ENCODE measurements at regions of chr16 and their contacts with region 1.

Region 1: GRCh38 chr16:46973207-46973995 is at the start of gene DNAJA2:
- DNase-seq: peak; percentile 86 to 95 (median 92)
- ATAC-seq: peak; percentile 98
- H3K4me3 ChIP-seq: peak within 1 kb of the TSS; percentile 81
- H3K4me3 Mint-ChIP-seq: peak within 1 kb of the TSS; percentile 88 to 98 (median 95)
- H3K27ac ChIP-seq: peak within 1 kb of the TSS; percentile 93
- H3K27ac Mint-ChIP-seq: peak within 1 kb of the TSS; percentile 87 to 100 (median 99)
- H3K4me1 ChIP-seq: peaks cover 26 to 33% of the 10 kb centered on the region in 2 donors
- H3K4me1 Mint-ChIP-seq: peaks cover 27 to 70% (median 51%) of the 10 kb centered on the region in 7 donors
- H3K27me3 ChIP-seq: no peaks in the 10 kb centered on the region
- H3K27me3 Mint-ChIP-seq: no peaks in the 10 kb centered on the region
- total RNA-seq, gene DNAJA2: 59.4 to 73.3 (median 60.9) TPM

Region 2: DNA sequence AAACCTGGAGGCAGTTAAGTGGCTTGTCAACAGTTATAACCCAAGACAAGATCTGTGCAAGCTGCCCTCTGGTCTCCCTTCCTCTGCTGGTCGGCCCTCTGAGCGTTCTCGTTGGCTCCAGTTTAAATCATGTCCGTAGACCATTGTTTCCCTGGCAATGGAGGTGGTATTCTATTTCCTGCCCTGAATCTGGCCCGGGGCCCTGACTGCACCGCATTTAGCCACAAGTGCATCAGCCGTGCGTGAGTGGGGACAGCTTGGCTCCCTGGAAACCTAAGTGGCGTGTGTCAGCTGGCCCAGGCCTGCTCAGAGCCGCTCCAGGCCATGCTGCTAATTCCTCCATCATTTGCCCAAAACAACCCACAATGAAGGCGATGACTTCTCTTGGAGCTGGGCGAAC is 210.3 kb before region 1 on chr16:
- CTCF ChIA-PET with region 1: no interaction called
- POLR2A ChIA-PET with region 1: no interaction called
- intact Hi-C with region 1: no loop called
- DNase-seq: no peak
- ATAC-seq: no peak
- H3K4me3 ChIP-seq: no peak overlapping the region
- H3K4me3 Mint-ChIP-seq: no peak overlapping the region
- H3K27ac ChIP-seq: no peak overlapping the region
- H3K27ac Mint-ChIP-seq: no peak overlapping the region
- H3K4me1 ChIP-seq: no peaks in the 10 kb centered on the region
- H3K4me1 Mint-ChIP-seq: peaks cover 0 to 4% (median 0%) of the 10 kb centered on the region in 7 donors
- H3K27me3 ChIP-seq: no peaks in the 10 kb centered on the region
- H3K27me3 Mint-ChIP-seq: peaks cover 0 to 8% (median 0%) of the 10 kb centered on the region in 5 donors

Region 3: GRCh38 chr16:46789499-46790414 is 183.6 kb before region 1 on chr16:
- CTCF ChIA-PET with region 1: no interaction called
- POLR2A ChIA-PET with region 1: interaction called, 8 read pairs
- intact Hi-C with region 1: loop called (anchors 1 to 2 kb)
- DNase-seq: peak; percentile 62 to 81 (median 79)
- ATAC-seq: peak; percentile 99
- H3K4me3 ChIP-seq: peak overlapping the region; percentile 79
- H3K4me3 Mint-ChIP-seq: peak overlapping the region; percentile 77 to 87 (median 84)
- H3K27ac ChIP-seq: peak overlapping the region; percentile 65
- H3K27ac Mint-ChIP-seq: peak overlapping the region; percentile 33 to 92 (median 82)
- H3K4me1 ChIP-seq: peaks cover 0 to 10% of the 10 kb centered on the region in 2 donors
- H3K4me1 Mint-ChIP-seq: peaks cover 5 to 27% (median 24%) of the 10 kb centered on the region in 7 donors
- H3K27me3 ChIP-seq: no peaks in the 10 kb centered on the region
- H3K27me3 Mint-ChIP-seq: peaks cover 0 to 3% (median 0%) of the 10 kb centered on the region in 5 donors

Region 4: DNA sequence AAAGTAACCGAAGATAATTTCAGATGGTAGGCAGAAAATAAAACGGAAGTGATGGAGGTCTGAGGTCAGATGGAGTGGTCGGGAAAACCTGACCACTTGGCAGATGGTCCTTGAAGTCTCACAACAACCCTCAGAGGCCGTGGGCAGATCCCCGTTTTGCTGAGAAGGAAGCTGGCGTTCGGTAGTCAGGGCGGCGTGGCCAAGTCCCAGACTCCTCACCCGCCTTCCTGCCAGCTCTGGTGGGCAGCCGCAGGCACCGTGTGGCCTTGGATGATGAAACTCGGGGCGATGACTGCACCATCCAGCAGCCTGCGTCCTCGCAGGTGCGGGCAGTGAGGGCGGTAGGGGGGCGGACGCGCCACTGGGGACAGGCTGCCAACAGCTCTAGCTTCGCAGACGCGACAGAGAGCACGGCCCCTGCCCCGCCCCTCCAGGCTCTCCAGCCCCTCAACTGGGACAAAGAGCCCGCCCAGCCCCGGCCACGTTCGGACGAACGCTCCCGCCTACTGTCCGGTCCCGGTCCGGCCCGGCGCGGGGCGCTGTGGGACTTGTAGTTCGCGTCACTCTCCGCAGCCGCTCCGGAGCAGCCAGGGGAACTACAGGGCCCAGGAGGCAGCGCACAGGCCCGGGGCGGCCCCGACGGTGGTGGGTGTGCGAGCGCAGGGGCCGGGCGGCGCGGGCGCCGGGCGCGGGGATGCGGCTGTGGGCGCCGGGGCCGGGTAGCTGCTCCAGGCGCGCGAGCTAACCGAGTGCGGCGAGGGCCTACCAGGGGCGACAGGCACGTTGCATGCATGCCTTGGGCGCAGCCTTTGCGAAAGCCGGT is 89.5 kb before region 1 on chr16 and contains the start of gene GPT2:
- CTCF ChIA-PET with region 1: no interaction called
- POLR2A ChIA-PET with region 1: no interaction called
- intact Hi-C with region 1: loop called (anchors 1 kb)
- DNase-seq: peak; percentile 29 to 89 (median 57)
- ATAC-seq: peak; percentile 97
- H3K4me3 ChIP-seq: peak within 1 kb of the TSS; percentile 67
- H3K4me3 Mint-ChIP-seq: peak within 1 kb of the TSS; percentile 86 to 92 (median 89)
- H3K27ac ChIP-seq: no peak within 1 kb of the TSS
- H3K27ac Mint-ChIP-seq: peak within 1 kb of the TSS in 5 of 9 donors; percentile 25 to 82 (median 71)
- H3K4me1 ChIP-seq: peaks cover 0 to 3% of the 10 kb centered on the region in 2 donors
- H3K4me1 Mint-ChIP-seq: peaks cover 8 to 21% (median 16%) of the 10 kb centered on the region in 7 donors
- H3K27me3 ChIP-seq: no peaks in the 10 kb centered on the region
- H3K27me3 Mint-ChIP-seq: peaks cover 0 to 39% (median 6%) of the 10 kb centered on the region in 5 donors
- total RNA-seq, gene GPT2: 0.40 to 7.7 (median 0.73) TPM

Region 5: GRCh38 chr16:46895399-46896313 is 77.7 kb before region 1 on chr16:
- CTCF ChIA-PET with region 1: no interaction called
- POLR2A ChIA-PET with region 1: no interaction called
- intact Hi-C with region 1: no loop called
- DNase-seq: no peak
- ATAC-seq: no peak
- H3K4me3 ChIP-seq: no peak overlapping the region
- H3K4me3 Mint-ChIP-seq: no peak overlapping the region
- H3K27ac ChIP-seq: no peak overlapping the region
- H3K27ac Mint-ChIP-seq: no peak overlapping the region
- H3K4me1 ChIP-seq: no peaks in the 10 kb centered on the region
- H3K4me1 Mint-ChIP-seq: peaks cover 0 to 3% (median 0%) of the 10 kb centered on the region in 7 donors
- H3K27me3 ChIP-seq: no peaks in the 10 kb centered on the region
- H3K27me3 Mint-ChIP-seq: peaks cover 0 to 4% (median 0%) of the 10 kb centered on the region in 5 donors

Region 6: DNA sequence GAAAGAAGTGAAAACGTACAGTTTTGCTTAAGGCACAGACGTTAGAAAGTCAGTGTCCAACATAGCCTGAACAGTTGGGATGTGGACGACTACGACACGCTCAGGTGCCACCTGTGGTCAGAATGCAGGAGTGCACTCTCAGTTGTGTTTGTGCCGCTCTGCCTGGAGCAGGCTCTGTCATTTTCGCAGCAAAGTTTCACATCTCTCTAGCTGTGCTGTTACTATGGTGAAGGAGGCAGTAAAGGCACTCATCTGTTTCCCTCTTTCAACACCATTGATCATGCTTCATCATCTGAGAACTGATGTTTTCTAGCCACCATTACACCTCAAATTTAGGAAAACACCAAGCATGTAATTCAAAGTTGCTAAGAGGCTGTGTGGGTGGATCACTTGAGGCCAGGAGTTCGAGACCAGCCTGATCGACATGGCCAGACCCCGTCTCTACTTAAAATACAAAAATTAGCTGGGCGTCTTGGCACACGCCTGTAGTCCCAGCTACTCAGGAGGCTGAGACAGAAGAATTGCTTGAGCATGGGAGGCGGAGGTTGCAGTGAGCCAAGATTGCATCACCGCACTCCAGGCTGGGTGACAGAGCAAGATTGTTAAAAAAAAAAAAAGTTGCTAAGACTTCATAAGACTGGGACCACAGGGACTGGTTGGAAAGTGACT is 45.0 kb after region 1 on chr16:
- CTCF ChIA-PET with region 1: no interaction called
- POLR2A ChIA-PET with region 1: interaction called, 3 read pairs
- intact Hi-C with region 1: loop called (anchors 2 kb)
- DNase-seq: peak in 3 of 9 donors; percentile 5 to 18 (median 10)
- ATAC-seq: peak; percentile 82
- H3K4me3 ChIP-seq: no peak overlapping the region
- H3K4me3 Mint-ChIP-seq: no peak overlapping the region
- H3K27ac ChIP-seq: no peak overlapping the region
- H3K27ac Mint-ChIP-seq: no peak overlapping the region
- H3K4me1 ChIP-seq: peaks cover 0 to 15% of the 10 kb centered on the region in 2 donors
- H3K4me1 Mint-ChIP-seq: peaks cover 6 to 22% (median 11%) of the 10 kb centered on the region in 7 donors
- H3K27me3 ChIP-seq: no peaks in the 10 kb centered on the region
- H3K27me3 Mint-ChIP-seq: peaks cover 0 to 3% (median 0%) of the 10 kb centered on the region in 5 donors

Region 7: GRCh38 chr16:47308601-47309000 is 335.2 kb after region 1 on chr16:
- CTCF ChIA-PET with region 1: no interaction called
- POLR2A ChIA-PET with region 1: no interaction called
- intact Hi-C with region 1: no loop called
- DNase-seq: no peak
- ATAC-seq: no peak
- H3K4me3 ChIP-seq: no peak overlapping the region
- H3K4me3 Mint-ChIP-seq: no peak overlapping the region
- H3K27ac ChIP-seq: no peak overlapping the region
- H3K27ac Mint-ChIP-seq: no peak overlapping the region
- H3K4me1 ChIP-seq: no peaks in the 10 kb centered on the region
- H3K4me1 Mint-ChIP-seq: peaks cover 0 to 2% (median 0%) of the 10 kb centered on the region in 7 donors
- H3K27me3 ChIP-seq: no peaks in the 10 kb centered on the region
- H3K27me3 Mint-ChIP-seq: no peaks in the 10 kb centered on the region

Region 8: DNA sequence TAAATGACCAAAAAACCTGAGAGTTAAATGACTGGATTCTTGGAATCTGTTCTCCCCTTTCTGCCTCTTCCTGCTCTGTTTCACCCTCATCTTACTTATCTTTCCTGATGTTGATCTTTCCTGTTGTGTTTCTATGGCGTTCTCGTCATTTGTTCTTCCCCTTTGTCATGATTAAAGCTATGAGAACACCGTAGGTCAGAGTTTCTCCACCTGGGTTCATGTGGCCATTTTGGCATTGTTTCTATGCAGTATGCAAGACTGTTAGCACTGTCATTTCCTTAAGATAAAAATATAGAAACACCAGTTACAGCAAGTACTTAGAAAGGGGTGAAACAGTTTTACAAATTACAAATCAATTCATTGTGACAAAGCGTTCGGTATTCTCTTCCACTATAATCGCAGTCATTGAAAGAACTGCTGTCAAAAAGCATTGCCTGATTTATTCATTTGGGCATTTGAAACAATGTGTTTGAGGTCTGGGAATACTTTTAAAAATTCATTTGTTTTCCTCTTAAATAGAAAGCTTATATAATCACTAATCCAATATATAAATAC is 653.8 kb after region 1 on chr16:
- CTCF ChIA-PET with region 1: no interaction called
- POLR2A ChIA-PET with region 1: no interaction called
- intact Hi-C with region 1: no loop called
- DNase-seq: no peak
- ATAC-seq: no peak
- H3K4me3 ChIP-seq: no peak overlapping the region
- H3K4me3 Mint-ChIP-seq: no peak overlapping the region
- H3K27ac ChIP-seq: no peak overlapping the region
- H3K27ac Mint-ChIP-seq: no peak overlapping the region
- H3K4me1 ChIP-seq: no peaks in the 10 kb centered on the region
- H3K4me1 Mint-ChIP-seq: peaks cover 0 to 21% (median 2%) of the 10 kb centered on the region in 7 donors
- H3K27me3 ChIP-seq: no peaks in the 10 kb centered on the region
- H3K27me3 Mint-ChIP-seq: no peaks in the 10 kb centered on the region

Region 9: DNA sequence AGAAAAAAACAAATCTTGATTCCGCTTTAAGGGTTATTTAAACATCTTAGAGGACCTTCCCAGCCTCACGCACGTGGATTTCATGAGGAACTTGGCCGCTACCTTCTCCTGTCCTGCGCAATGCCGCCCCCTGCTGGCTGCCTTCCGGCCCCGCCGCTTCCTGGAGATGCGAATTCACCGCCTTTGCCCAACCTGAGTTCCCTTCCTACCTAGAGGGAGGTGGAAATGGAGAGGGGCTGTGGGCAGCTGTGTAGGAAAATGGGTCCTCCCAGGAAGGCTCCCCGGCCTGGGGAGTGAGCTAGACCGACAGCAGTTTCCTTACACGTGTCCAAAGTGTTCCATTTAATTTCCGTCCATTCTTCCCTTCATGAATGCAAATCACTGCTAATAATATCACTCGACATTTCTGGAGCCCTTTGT is 1183.4 kb after region 1 on chr16:
- CTCF ChIA-PET with region 1: no interaction called
- POLR2A ChIA-PET with region 1: no interaction called
- intact Hi-C with region 1: loop called in 1 of 2 experiments (anchors 2 kb)
- DNase-seq: peak; percentile 33 to 89 (median 69)
- ATAC-seq: peak; percentile 88
- H3K4me3 ChIP-seq: no peak overlapping the region
- H3K4me3 Mint-ChIP-seq: no peak overlapping the region
- H3K27ac ChIP-seq: no peak overlapping the region
- H3K27ac Mint-ChIP-seq: no peak overlapping the region
- H3K4me1 ChIP-seq: no peaks in the 10 kb centered on the region
- H3K4me1 Mint-ChIP-seq: peaks cover 0 to 23% (median 0%) of the 10 kb centered on the region in 7 donors
- H3K27me3 ChIP-seq: no peaks in the 10 kb centered on the region
- H3K27me3 Mint-ChIP-seq: peaks cover 0 to 41% (median 9%) of the 10 kb centered on the region in 5 donors

Region 10: DNA sequence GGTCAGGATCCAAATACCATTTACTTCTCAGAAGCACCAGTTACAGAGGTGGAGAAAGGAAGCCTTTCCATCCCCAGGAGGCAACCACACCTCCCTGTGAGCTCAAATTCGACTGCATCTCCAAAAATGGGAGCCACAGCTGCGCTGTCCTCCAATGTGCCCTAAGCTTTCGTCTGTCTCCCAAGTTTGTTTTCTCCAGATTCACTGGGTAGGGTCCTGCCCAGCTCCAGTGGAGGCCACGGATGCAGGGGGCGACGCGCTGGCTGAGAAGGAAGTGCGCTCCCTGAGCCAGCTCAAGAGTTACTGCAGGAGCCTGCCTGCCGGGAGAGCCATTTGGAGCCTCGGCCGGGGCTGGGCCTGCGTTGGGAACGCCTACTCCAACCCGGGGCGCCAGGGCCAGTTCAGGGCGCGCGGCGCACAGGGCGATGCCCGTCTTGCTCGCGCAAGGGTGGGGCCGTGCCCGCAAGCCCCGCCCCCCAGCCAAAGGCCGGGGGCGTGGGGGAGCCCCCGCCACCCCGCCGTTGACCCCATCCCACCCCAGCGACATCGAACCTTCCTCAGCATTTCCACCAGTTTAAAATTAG is 1392.3 kb after region 1 on chr16:
- CTCF ChIA-PET with region 1: no interaction called
- POLR2A ChIA-PET with region 1: interaction called, 7 read pairs
- intact Hi-C with region 1: loop called (anchors 5 kb)
- DNase-seq: peak; percentile 66 to 86 (median 73)
- ATAC-seq: peak; percentile 95
- H3K4me3 ChIP-seq: peak overlapping the region; percentile 88
- H3K4me3 Mint-ChIP-seq: peak overlapping the region; percentile 83 to 100 (median 94)
- H3K27ac ChIP-seq: peak overlapping the region; percentile 77
- H3K27ac Mint-ChIP-seq: peak overlapping the region; percentile 89 to 100 (median 98)
- H3K4me1 ChIP-seq: peaks cover 14 to 15% of the 10 kb centered on the region in 2 donors
- H3K4me1 Mint-ChIP-seq: peaks cover 24 to 71% (median 54%) of the 10 kb centered on the region in 7 donors
- H3K27me3 ChIP-seq: no peaks in the 10 kb centered on the region
- H3K27me3 Mint-ChIP-seq: no peaks in the 10 kb centered on the region

Measured in naive thymus-derived CD4-positive, alpha-beta T cell (primary cell).